ENCODE measurements at regions of chr17 and their contacts with region 1.

Region 1: GRCh38 chr17:81428948-81429774 is 33.9 kb downstream of the BAHCC1 start:
- DNase-seq: no peak
- H3K4me3 Mint-ChIP-seq: no peak overlapping the region
- H3K27ac Mint-ChIP-seq: no peak overlapping the region
- H3K4me1 Mint-ChIP-seq: no peaks in the 10 kb centered on the region
- H3K27me3 Mint-ChIP-seq: peaks cover 15% of the 10 kb centered on the region

Region 2: DNA sequence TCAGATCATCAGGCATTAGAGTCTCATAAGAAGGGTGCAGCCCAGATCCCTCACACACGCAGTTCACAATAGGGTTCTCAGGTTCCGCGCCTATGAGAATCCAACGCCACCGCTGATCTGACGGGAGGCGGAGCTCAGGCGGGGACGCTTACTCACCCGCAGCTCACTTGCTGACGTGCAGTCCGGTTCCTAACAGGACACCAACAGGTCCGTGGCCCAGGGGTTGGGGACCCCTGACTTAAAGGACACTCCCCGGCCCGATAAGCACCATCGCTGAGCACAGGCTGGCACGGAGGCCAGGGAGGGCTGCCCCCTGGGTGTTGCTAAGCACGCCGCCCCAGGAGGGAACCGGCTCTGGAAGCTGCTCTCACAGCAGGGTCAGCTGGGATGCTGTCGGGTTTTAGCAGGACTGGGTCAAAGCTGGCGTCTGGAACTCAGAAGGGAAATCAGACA is 64.0 kb before region 1 on chr17:
- intact Hi-C with region 1: no loop called
- DNase-seq: peak; percentile 60
- H3K4me3 Mint-ChIP-seq: peak overlapping the region; percentile 30
- H3K27ac Mint-ChIP-seq: no peak overlapping the region
- H3K4me1 Mint-ChIP-seq: peaks cover 9% of the 10 kb centered on the region
- H3K27me3 Mint-ChIP-seq: peaks cover 37% of the 10 kb centered on the region

Region 3: GRCh38 chr17:81405411-81405872 is 23.7 kb before region 1 on chr17:
- intact Hi-C with region 1: loop called (anchors 2 kb)
- DNase-seq: no peak
- H3K4me3 Mint-ChIP-seq: no peak overlapping the region
- H3K27ac Mint-ChIP-seq: no peak overlapping the region
- H3K4me1 Mint-ChIP-seq: no peaks in the 10 kb centered on the region
- H3K27me3 Mint-ChIP-seq: peaks cover 59% of the 10 kb centered on the region

Measured in activated CD4-positive, alpha-beta T cell treated with anti-CD3 and anti-CD28 coated beads, Interleukin-2, amount 10 ng/mL, durations not matched to agents 24 days and 14 days (primary cell).